IMR-90 (cell line): ENCODE measurements at regions of chr2 and their contacts with region 1.

Region 1: GRCh38 chr2:64516628-64517510 is 7.3 kb upstream of the AFTPH start:
- DNase-seq: no peak
- ATAC-seq: no peak
- H3K4me3 ChIP-seq: no peak overlapping the region
- H3K27ac ChIP-seq: no peak overlapping the region
- H3K4me1 ChIP-seq: no peaks in the 10 kb centered on the region
- H3K27me3 ChIP-seq: peaks cover 39% of the 10 kb centered on the region
- CTCF ChIP-seq: no peak
- POLR2A ChIP-seq: no peak
- RAD21 ChIP-seq: no peak

Region 2: GRCh38 chr2:64562148-64562784 is 45.4 kb after region 1 on chr2:
- CTCF ChIA-PET with region 1: no interaction called
- POLR2A ChIA-PET with region 1: no interaction called
- dilution Hi-C with region 1: no loop called
- in situ Hi-C with region 1: loop called (anchors 5 kb)
- intact Hi-C with region 1: no loop called
- DNase-seq: peak; percentile 22
- ATAC-seq: no peak
- H3K4me3 ChIP-seq: no peak overlapping the region
- H3K27ac ChIP-seq: no peak overlapping the region
- H3K4me1 ChIP-seq: no peaks in the 10 kb centered on the region
- H3K27me3 ChIP-seq: no peaks in the 10 kb centered on the region
- CTCF ChIP-seq: peak; percentile 58
- POLR2A ChIP-seq: no peak
- RAD21 ChIP-seq: peak; percentile 60